ENCODE measurements at regions of chr9 and their contacts with region 1.

Region 1: DNA sequence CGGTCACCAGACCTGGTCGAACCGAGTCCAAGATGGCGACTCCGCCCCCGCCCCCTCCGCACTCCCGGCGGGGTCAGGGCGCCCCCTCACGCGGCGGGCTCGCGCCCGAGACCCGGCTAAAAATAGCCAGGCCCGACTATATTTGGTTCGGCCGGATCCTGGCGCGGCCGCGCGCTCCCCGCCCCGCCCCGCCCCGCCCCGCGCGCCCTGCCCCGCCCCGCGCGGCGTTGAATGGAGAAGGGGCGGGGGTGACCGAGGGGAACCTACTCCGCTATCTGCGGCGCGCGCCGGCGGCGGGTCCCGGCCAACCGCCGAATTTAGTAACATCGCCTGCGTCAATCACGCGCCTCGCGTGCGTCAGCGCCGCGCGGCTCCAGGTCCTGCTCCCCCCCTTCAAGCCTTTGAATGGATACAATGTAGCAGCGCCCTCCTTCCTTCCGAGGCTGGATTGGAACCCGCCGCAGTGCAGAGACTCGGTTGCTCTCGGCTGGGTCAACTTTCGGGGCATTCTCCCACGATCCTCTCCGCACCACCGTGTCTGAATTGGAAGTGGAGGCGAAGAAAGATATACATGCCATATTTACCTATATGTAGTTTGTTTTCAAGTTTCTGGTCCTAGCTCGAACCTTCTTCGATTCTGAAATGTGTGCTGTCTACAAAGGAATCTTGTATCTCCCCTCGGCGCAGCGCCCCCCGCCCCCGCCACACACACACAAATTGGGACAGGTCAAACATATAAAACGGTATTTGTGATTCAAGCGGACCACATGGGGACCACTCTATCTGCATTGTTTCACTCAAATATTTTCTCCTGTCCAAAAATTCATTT is 1.6 kb upstream of the NR4A3 start:
- DNase-seq: no peak
- ATAC-seq: peak; percentile 53
- H3K4me3 Mint-ChIP-seq: peak overlapping the region; percentile 96
- H3K27ac Mint-ChIP-seq: peak overlapping the region; percentile 97
- H3K4me1 Mint-ChIP-seq: peaks cover 42% of the 10 kb centered on the region
- H3K27me3 Mint-ChIP-seq: no peaks in the 10 kb centered on the region
- CTCF ChIP-seq: no peak

Region 2: GRCh38 chr9:97921959-97922724 is 1897.9 kb before region 1 on chr9 and contains the start of gene TRMO:
- CTCF ChIA-PET with region 1: no interaction called
- POLR2A ChIA-PET with region 1: no interaction called
- intact Hi-C with region 1: loop called (anchors 5 kb)
- DNase-seq: peak; percentile 97
- ATAC-seq: peak; percentile 74
- H3K4me3 Mint-ChIP-seq: peak within 1 kb of the TSS; percentile 85
- H3K27ac Mint-ChIP-seq: peak within 1 kb of the TSS; percentile 95
- H3K4me1 Mint-ChIP-seq: peaks cover 57% of the 10 kb centered on the region
- H3K27me3 Mint-ChIP-seq: peaks cover 2% of the 10 kb centered on the region
- CTCF ChIP-seq: no peak
- total RNA-seq, gene TRMO: 25.3 and 32.4 TPM in 2 replicates

Region 3: DNA sequence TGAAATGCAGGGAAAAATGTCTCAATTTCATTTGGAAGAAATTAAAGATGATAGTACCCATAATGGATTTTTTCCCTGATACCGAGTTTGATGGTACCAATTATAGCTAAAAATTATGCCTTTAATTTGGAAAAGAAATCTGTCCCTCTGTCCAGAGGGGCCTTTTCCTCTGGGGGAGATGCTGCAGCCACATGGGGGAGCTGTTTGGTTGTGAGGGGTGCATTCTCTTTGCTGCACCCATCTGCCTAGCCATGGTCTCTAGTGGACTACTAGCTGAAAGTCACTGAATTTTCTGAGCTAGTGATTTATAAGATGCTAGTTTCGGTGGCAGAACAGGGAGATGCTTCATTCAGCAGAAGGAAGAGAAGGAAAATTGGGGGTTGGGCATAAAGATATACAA is 588.4 kb before region 1 on chr9:
- CTCF ChIA-PET with region 1: interaction called, 14 read pairs
- POLR2A ChIA-PET with region 1: interaction called, 25 read pairs
- intact Hi-C with region 1: loop called (anchors 1 kb)
- DNase-seq: peak; percentile 46
- ATAC-seq: peak; percentile 11
- H3K4me3 Mint-ChIP-seq: peak overlapping the region; percentile 47
- H3K27ac Mint-ChIP-seq: peak overlapping the region; percentile 65
- H3K4me1 Mint-ChIP-seq: peaks cover 45% of the 10 kb centered on the region
- H3K27me3 Mint-ChIP-seq: no peaks in the 10 kb centered on the region
- CTCF ChIP-seq: no peak

Region 4: GRCh38 chr9:99513441-99514112 is 306.5 kb before region 1 on chr9:
- CTCF ChIA-PET with region 1: no interaction called
- POLR2A ChIA-PET with region 1: interaction called, 13 read pairs
- intact Hi-C with region 1: loop called (anchors 1 kb)
- DNase-seq: peak; percentile 22
- ATAC-seq: peak; percentile 49
- H3K4me3 Mint-ChIP-seq: peak overlapping the region; percentile 61
- H3K27ac Mint-ChIP-seq: peak overlapping the region; percentile 84
- H3K4me1 Mint-ChIP-seq: peaks cover 88% of the 10 kb centered on the region
- H3K27me3 Mint-ChIP-seq: no peaks in the 10 kb centered on the region
- CTCF ChIP-seq: no peak

Region 5: GRCh38 chr9:99906403-99907207 is 86.5 kb after region 1 on chr9 and contains the start of gene STX17:
- CTCF ChIA-PET with region 1: interaction called, 3 read pairs
- POLR2A ChIA-PET with region 1: interaction called, 14 read pairs
- intact Hi-C with region 1: loop called (anchors 1 kb)
- DNase-seq: peak; percentile 90
- ATAC-seq: peak; percentile 87
- H3K4me3 Mint-ChIP-seq: peak within 1 kb of the TSS; percentile 98
- H3K27ac Mint-ChIP-seq: peak within 1 kb of the TSS; percentile 95
- H3K4me1 Mint-ChIP-seq: peaks cover 17% of the 10 kb centered on the region
- H3K27me3 Mint-ChIP-seq: no peaks in the 10 kb centered on the region
- CTCF ChIP-seq: no peak
- total RNA-seq, gene STX17: 32.2 and 39.2 TPM in 2 replicates

Region 6: DNA sequence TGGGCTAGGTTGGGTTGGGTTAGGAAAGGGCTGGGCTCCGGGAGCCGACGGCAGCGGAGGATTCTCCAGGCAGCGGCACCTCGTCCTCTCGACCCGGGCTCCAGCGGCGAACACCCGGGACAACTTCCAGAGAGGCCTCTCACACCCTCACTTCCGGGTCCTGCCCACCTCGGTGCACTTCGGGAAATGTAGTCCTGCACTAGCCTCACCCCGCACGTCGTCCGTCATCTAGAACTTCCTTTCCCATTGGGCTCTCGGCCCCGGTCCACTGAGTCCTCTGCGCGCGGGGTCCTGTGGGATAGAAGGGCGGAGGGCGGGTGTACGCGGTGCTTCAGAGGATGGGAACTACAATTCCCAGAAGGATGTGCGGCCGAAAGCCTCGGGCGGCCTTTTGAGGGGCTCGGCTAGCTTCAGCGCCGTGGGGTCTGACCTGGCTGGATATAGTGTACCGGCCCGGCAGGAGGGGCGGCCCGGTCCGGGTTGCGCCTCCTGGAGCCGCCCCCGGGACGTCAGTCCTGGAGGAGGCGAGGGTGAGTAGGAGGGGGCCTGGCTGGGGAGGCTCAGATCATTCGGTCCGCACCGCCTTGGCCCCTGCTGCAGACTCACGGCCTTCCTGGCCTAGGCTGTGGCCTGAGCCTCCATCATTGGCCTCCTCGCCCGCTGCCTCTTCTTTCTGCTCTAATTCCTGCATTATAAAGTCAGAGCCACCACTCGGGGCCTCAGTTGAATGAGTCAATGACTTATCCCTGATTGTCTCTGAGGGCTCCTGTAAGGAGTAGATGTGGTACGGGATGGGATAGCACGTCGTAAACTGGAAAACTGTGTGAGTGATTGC is 279.0 kb after region 1 on chr9 and contains the starts of genes ERP44 and INVS:
- CTCF ChIA-PET with region 1: no interaction called
- POLR2A ChIA-PET with region 1: no interaction called
- intact Hi-C with region 1: loop called (anchors 1 kb)
- DNase-seq: peak; percentile 86
- ATAC-seq: peak; percentile 99
- H3K4me3 Mint-ChIP-seq: peak within 1 kb of the TSS; percentile 100
- H3K27ac Mint-ChIP-seq: peak within 1 kb of the TSS; percentile 97
- H3K4me1 Mint-ChIP-seq: peaks cover 42% of the 10 kb centered on the region
- H3K27me3 Mint-ChIP-seq: no peaks in the 10 kb centered on the region
- CTCF ChIP-seq: no peak
- total RNA-seq, gene ERP44: 14.8 and 16.5 TPM in 2 replicates
- total RNA-seq, gene INVS: 26.7 and 34.0 TPM in 2 replicates

Region 7: DNA sequence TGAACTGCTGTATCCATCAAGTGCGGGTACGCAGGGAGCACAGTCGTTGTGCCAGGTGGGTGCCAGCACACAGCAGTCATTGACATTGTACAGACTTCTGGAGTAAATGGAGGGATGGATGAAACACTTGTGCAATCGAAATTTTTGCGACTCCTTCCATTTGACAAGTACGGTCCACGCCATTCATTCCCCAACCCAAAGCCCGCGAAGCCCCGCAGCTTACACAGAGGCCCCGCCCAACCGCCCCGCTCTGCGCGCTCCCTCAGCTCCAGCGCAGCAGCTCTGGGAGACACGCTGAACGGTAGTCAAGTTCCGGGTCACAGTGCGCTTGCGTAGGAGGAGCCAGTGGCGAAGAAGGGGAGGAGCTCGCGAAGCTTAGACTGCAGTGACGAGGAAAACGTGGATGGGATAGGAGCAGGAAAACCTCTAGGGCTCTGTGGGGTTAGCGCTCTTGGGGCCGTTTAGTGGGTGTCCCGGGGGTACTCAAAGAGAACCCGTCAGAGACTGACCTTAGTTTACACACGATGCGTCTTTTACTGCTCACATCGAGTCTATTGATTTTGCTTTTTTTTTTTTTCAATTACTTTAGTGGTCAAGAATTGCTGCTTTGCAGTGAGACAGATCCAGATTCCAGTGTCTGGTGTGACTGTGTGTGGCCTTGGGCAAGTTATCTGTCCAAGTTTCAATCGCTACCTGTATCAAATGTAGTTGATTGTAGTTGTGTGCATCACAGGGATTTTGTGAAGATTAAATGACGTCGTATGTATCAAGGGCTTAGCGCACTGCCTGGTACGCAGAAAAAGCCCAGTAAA is 591.6 kb after region 1 on chr9:
- CTCF ChIA-PET with region 1: no interaction called
- POLR2A ChIA-PET with region 1: no interaction called
- intact Hi-C with region 1: loop called (anchors 10 kb)
- DNase-seq: peak; percentile 76
- ATAC-seq: peak; percentile 100
- H3K4me3 Mint-ChIP-seq: peak overlapping the region; percentile 89
- H3K27ac Mint-ChIP-seq: peak overlapping the region; percentile 78
- H3K4me1 Mint-ChIP-seq: peaks cover 14% of the 10 kb centered on the region
- H3K27me3 Mint-ChIP-seq: peaks cover 9% of the 10 kb centered on the region
- CTCF ChIP-seq: no peak

Measured in activated B cell treated with CpG ODN at 0.5 μM for 24 hours (primary cell).